CD8-positive, alpha-beta T cell (primary cell): ENCODE measurements at regions of chr16 and their contacts with region 1.

Region 1: DNA sequence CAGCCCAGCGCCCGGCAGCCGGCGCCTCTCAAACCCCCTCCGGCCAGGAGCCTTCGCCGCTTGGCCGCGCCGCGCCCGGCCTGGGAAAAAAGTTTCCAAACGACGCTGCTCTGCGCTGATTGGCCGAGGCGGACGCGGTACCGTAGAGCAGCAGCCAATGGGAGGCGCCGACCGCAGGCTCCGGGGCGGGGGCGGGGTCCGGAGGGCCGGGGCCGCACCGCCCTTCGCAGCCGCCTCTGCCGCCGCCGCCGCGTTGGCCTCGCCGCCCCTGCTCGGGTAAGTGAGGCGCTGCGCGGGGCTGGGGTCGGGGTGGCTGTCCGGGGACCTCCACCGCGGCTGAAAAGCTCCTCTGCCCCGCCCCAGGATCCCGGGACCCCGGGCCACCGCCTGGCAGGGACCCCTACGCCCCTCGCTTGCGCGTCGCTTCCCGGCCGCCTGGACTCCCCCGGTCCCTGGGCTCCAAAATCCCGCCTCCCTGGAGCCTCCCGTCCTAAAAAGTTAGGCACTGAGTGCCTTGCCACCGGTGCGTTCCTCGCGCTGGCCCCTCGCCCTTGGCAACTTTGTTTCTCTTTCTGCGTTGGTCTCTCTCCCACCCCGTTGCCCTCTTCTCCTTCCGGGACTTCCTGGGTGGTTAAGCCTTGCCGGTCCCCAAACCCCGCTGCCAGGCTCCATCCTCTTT is at the start of gene NDE1:
- DNase-seq: peak; percentile 66 to 93 (median 86)
- ATAC-seq: peak; percentile 95
- H3K4me3 ChIP-seq: peak within 1 kb of the TSS; percentile 67 to 90
- H3K4me3 Mint-ChIP-seq: peak within 1 kb of the TSS; percentile 99
- H3K27ac ChIP-seq: peak within 1 kb of the TSS; percentile 91 to 92
- H3K27ac Mint-ChIP-seq: peak within 1 kb of the TSS; percentile 99
- H3K4me1 ChIP-seq: peaks cover 29% of the 10 kb centered on the region
- H3K4me1 Mint-ChIP-seq: peaks cover 46% of the 10 kb centered on the region
- H3K27me3 ChIP-seq: no peaks in the 10 kb centered on the region
- H3K27me3 Mint-ChIP-seq: no peaks in the 10 kb centered on the region
- CTCF ChIP-seq: no peak
- total RNA-seq, gene NDE1: 113 to 119 TPM

Region 2: DNA sequence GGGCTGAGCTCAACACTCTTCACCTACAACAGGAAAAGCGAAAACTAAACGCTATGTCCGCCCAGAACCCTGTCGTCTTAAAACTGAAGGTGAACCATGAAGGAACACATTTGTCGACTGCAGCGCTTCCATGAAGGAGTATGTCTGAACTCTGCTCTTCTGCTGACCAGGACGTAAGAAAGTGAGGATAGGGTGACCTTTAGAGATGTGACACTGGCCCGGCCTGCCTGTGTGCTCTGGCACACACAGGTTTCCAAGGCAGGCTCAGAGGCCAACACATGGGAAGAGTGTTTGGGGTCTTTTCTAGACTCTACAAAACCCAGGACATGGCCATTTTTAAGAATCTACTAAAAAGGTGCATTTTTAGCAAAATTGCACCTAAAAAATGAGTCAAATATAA is 28.3 kb before region 1 on chr16:
- CTCF ChIA-PET with region 1: no interaction called
- POLR2A ChIA-PET with region 1: no interaction called
- intact Hi-C with region 1: no loop called
- DNase-seq: no peak
- ATAC-seq: no peak
- H3K4me3 ChIP-seq: no peak overlapping the region
- H3K4me3 Mint-ChIP-seq: no peak overlapping the region
- H3K27ac ChIP-seq: no peak overlapping the region
- H3K27ac Mint-ChIP-seq: no peak overlapping the region
- H3K4me1 ChIP-seq: no peaks in the 10 kb centered on the region
- H3K4me1 Mint-ChIP-seq: no peaks in the 10 kb centered on the region
- H3K27me3 ChIP-seq: no peaks in the 10 kb centered on the region
- H3K27me3 Mint-ChIP-seq: no peaks in the 10 kb centered on the region
- CTCF ChIP-seq: no peak

Region 3: DNA sequence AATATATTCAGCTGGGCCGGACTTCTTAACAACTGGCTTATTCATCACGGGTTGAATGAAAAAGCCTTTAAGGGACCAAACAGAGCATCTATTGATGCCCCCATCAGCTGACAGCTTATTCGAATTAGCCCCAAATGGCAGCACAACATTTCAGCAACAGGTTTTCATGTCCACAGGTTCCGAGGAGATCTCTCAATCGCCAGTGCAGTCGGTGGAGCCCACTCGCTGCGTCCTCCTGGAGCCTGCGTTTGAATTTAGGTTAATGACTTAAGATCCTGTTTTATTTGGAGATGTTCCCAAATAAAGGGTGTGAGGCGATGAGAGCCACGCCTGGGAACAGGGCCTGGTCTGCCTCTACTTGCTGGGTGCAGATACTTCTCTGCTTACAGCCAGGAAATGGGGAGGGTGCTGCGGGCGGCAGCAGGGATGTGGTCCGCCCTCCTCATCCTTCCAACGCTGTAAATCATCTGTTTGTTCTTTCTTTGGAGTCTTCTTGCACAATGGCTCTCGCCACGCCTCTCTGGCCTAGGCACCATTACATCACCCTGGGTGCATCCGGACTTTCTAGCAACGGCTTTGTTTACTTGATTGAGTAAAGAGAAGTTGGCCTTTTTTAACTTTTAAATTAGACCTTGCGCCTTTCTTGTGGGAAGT is 22.5 kb after region 1 on chr16:
- CTCF ChIA-PET with region 1: interaction called, 4 read pairs
- POLR2A ChIA-PET with region 1: interaction called, 9 read pairs
- intact Hi-C with region 1: loop called (anchors 1 to 2 kb)
- DNase-seq: peak; percentile 52 to 92 (median 77)
- ATAC-seq: peak; percentile 92
- H3K4me3 ChIP-seq: no peak overlapping the region
- H3K4me3 Mint-ChIP-seq: peak overlapping the region; percentile 66
- H3K27ac ChIP-seq: peak overlapping the region; percentile 87 to 93
- H3K27ac Mint-ChIP-seq: peak overlapping the region; percentile 92
- H3K4me1 ChIP-seq: peaks cover 36% of the 10 kb centered on the region
- H3K4me1 Mint-ChIP-seq: peaks cover 41% of the 10 kb centered on the region
- H3K27me3 ChIP-seq: no peaks in the 10 kb centered on the region
- H3K27me3 Mint-ChIP-seq: no peaks in the 10 kb centered on the region
- CTCF ChIP-seq: no peak